ENCODE measurements at regions of chr6 and their contacts with region 1.

Region 1: DNA sequence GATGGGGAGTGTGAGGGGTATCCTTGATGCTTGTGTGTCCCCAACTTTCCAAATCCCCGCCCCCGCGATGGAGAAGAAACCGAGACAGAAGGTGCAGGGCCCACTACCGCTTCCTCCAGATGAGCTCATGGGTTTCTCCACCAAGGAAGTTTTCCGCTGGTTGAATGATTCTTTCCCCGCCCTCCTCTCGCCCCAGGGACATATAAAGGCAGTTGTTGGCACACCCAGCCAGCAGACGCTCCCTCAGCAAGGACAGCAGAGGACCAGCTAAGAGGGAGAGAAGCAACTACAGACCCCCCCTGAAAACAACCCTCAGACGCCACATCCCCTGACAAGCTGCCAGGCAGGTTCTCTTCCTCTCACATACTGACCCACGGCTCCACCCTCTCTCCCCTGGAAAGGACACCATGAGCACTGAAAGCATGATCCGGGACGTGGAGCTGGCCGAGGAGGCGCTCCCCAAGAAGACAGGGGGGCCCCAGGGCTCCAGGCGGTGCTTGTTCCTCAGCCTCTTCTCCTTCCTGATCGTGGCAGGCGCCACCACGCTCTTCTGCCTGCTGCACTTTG is at the start of gene TNF:
- DNase-seq: peak; percentile 88
- ATAC-seq: peak; percentile 32
- H3K4me3 Mint-ChIP-seq: peak within 1 kb of the TSS; percentile 99
- H3K27ac Mint-ChIP-seq: peak within 1 kb of the TSS; percentile 92
- H3K4me1 Mint-ChIP-seq: peaks cover 87% of the 10 kb centered on the region
- H3K27me3 Mint-ChIP-seq: no peaks in the 10 kb centered on the region
- total RNA-seq, gene TNF: 58.8 to 65.1 TPM

Region 2: DNA sequence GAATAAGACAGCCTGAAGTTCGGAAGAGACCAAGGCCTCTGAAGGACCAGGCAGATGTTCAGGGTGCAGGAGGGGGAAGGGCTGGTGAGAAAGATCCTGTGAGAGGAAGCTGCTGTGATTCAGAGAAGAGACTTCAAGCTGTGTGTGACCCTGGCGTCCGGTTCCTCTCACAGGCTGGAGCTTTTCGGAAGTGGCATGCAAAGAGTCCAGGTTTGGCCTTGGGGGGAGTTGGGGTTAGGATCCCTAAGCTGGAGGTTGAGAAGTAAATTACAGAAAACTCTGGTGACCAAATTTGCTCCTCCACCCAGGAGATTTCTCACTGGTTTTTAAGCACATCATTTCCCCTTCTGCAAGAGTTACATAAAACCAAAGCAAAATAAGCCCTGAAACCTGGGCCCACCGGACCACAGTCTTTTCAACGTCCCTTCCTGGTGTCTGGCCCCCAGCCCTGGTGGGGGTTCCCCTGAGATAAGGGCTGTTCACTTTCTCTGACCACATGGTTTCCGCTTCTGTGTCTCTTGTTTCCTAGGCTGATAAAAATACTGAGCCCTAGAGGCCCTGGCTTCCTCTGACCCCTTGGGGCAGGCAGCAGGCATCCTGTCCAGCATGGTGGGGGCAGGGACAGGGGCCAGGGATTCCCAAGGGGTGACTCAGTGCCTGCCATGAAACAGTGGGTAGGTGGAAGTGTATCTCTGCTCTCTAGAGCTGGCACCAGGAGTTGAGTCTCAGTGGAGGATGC is 15.3 kb before region 1 on chr6:
- CTCF ChIA-PET with region 1: interaction called, 189 read pairs
- DNase-seq: peak; percentile 79
- ATAC-seq: peak; percentile 77
- H3K4me3 Mint-ChIP-seq: peak overlapping the region; percentile 26
- H3K27ac Mint-ChIP-seq: peak overlapping the region; percentile 82
- H3K4me1 Mint-ChIP-seq: peaks cover 61% of the 10 kb centered on the region
- H3K27me3 Mint-ChIP-seq: peaks cover 33% of the 10 kb centered on the region